Ovary (tissue), 10 donors: ENCODE measurements at regions of chr12 and their contacts with region 1.

Region 1: DNA sequence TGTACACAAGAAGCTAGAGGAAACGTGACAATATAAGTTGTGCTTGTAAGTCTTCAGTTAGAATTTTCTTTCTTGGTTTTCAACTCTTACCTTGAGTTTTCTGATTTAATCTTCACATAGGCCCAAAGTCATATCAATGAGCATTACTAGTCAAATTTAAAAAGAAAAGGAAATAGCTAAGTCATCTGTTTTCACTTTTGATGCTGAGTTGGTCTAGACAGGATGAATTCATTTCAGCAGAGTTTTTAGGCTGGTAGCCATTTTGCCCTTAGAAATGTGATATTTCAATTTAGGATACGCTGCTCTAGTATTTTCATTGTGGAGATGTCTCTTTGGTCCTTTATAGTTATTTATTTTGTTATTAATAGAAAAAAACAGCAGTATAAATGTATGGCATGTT is 44.6 kb upstream of the KRAS start:
- DNase-seq: no peak
- H3K4me3 ChIP-seq: no peak overlapping the region
- H3K27ac ChIP-seq: no peak overlapping the region
- H3K4me1 ChIP-seq: no peaks in the 10 kb centered on the region
- H3K27me3 ChIP-seq: no peaks in the 10 kb centered on the region
- CTCF ChIP-seq: no peak
- EP300 ChIP-seq: no peak
- POLR2A ChIP-seq: no peak

Region 2: GRCh38 chr12:25089738-25090137 is 205.6 kb before region 1 on chr12:
- intact Hi-C with region 1: loop called in 1 of 4 experiments (anchors 10 kb)
- DNase-seq: no peak
- H3K4me3 ChIP-seq: no peak overlapping the region
- H3K27ac ChIP-seq: no peak overlapping the region
- H3K4me1 ChIP-seq: no peaks in the 10 kb centered on the region
- H3K27me3 ChIP-seq: no peaks in the 10 kb centered on the region
- CTCF ChIP-seq: no peak
- EP300 ChIP-seq: no peak
- POLR2A ChIP-seq: no peak

Region 3: DNA sequence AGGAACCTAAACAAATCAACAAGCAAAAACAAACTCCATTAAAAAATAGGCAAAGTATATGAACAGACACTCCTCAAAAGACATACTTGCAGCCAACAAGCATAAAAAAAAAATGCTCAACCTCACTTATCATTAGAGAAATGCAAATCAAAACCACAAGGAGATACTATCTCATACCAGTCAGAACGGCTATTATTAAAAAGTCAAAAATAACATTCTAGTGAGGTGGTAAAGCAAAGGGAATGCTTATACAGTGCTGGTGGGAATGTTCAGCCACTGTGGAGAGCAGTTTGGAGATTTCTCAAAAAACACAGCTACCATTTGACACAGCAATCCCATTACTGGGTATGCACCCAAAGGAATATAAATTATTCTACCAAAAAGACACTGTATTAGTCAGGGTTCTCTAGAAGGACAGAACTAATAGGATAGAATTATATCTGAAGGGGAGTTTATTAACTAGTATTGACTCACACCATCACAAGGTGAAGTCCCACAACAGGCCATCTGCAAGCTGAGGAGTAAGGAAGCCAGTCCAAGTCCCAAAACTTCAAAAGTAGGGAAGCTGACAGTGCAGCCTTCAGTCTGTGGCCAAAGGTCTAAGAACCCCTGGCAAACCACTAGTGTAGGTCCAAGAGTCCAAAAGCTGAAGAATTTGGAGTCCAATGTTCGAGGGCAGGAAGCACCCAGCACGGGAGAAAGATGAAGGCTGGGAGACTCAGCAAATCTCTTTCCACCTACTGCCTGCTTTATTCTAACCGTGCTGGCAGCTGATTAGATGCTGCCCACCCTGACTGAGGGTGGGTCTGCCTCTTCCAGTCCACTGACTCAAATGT is 56.9 kb after region 1 on chr12:
- intact Hi-C with region 1: no loop called
- DNase-seq: no peak
- H3K4me3 ChIP-seq: no peak overlapping the region
- H3K27ac ChIP-seq: no peak overlapping the region
- H3K4me1 ChIP-seq: no peaks in the 10 kb centered on the region
- H3K27me3 ChIP-seq: no peaks in the 10 kb centered on the region
- CTCF ChIP-seq: no peak
- EP300 ChIP-seq: no peak
- POLR2A ChIP-seq: no peak

Region 4: GRCh38 chr12:26122681-26123481 is 827.5 kb after region 1 on chr12:
- intact Hi-C with region 1: no loop called
- DNase-seq: peak; percentile 74 to 83 (median 76)
- H3K4me3 ChIP-seq: peak overlapping the region; percentile 59
- H3K27ac ChIP-seq: peak overlapping the region; percentile 86 to 94
- H3K4me1 ChIP-seq: peaks cover 5% of the 10 kb centered on the region
- H3K27me3 ChIP-seq: no peaks in the 10 kb centered on the region
- CTCF ChIP-seq: peak in 1 of 3 donors; percentile 12
- EP300 ChIP-seq: no peak
- POLR2A ChIP-seq: peak; percentile 33